ENCODE measurements at regions of chr6 and their contacts with region 1.

Region 1: GRCh38 chr6:46848684-46849360 is 55.6 kb downstream of the MEP1A start:
- DNase-seq: no peak
- H3K4me3 ChIP-seq: no peak overlapping the region
- CTCF ChIP-seq: peak; percentile 98

Region 2: GRCh38 chr6:46862381-46862780 is 13.6 kb after region 1 on chr6:
- CTCF ChIA-PET with region 1: interaction called, 13 read pairs
- POLR2A ChIA-PET with region 1: no interaction called
- DNase-seq: no peak
- H3K4me3 ChIP-seq: no peak overlapping the region
- CTCF ChIP-seq: no peak

Region 3: DNA sequence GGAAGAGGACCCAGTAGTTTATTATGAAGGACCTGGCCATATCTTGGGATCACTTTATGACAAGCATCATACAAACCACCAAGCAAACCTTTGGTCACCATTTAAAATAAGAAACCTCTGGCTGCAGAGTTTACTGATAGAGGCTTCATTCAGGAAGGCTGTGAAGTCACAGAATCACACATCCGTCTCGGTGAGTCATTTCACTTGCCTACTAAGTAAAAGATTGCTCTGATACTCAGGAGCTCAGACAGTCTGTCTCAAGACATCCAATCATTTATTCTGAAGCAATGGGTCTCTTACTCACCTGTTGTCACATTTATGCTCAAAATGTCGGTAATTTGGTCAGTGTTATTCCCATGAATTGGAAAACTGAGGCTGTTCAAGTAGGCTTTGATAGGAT is 39.2 kb after region 1 on chr6:
- CTCF ChIA-PET with region 1: no interaction called
- POLR2A ChIA-PET with region 1: no interaction called
- DNase-seq: no peak
- H3K4me3 ChIP-seq: no peak overlapping the region
- CTCF ChIP-seq: no peak

Region 4: GRCh38 chr6:46949632-46950280 is 100.9 kb after region 1 on chr6:
- CTCF ChIA-PET with region 1: no interaction called
- POLR2A ChIA-PET with region 1: no interaction called
- DNase-seq: no peak
- H3K4me3 ChIP-seq: no peak overlapping the region
- CTCF ChIP-seq: no peak

Region 5: DNA sequence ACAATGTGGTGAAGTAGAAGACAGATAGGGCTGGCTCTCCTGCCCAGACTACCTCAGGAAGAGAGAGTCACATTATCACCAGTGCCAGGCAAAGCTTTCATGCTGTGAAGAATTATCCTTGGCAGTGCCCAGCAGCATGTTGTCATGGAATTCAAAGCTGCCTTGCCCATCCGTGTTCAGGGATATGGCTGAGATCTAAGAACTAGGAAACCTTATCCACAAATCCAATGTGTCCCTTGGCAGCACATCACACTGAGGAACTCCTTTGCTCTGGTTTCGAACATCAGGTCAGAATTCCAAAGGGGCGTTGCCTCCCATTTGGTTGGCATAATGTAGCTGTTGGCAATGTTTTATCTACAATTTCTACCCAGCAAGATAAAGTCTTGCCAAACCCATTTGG is 140.6 kb after region 1 on chr6:
- CTCF ChIA-PET with region 1: interaction called, 31 read pairs
- POLR2A ChIA-PET with region 1: no interaction called
- DNase-seq: no peak
- H3K4me3 ChIP-seq: no peak overlapping the region
- CTCF ChIP-seq: no peak

Region 6: GRCh38 chr6:47042275-47042791 is 193.5 kb after region 1 on chr6 and contains the start of gene ADGRF1:
- CTCF ChIA-PET with region 1: interaction called, 56 read pairs
- POLR2A ChIA-PET with region 1: no interaction called
- DNase-seq: no peak
- H3K4me3 ChIP-seq: no peak within 1 kb of the TSS
- CTCF ChIP-seq: no peak

Region 7: DNA sequence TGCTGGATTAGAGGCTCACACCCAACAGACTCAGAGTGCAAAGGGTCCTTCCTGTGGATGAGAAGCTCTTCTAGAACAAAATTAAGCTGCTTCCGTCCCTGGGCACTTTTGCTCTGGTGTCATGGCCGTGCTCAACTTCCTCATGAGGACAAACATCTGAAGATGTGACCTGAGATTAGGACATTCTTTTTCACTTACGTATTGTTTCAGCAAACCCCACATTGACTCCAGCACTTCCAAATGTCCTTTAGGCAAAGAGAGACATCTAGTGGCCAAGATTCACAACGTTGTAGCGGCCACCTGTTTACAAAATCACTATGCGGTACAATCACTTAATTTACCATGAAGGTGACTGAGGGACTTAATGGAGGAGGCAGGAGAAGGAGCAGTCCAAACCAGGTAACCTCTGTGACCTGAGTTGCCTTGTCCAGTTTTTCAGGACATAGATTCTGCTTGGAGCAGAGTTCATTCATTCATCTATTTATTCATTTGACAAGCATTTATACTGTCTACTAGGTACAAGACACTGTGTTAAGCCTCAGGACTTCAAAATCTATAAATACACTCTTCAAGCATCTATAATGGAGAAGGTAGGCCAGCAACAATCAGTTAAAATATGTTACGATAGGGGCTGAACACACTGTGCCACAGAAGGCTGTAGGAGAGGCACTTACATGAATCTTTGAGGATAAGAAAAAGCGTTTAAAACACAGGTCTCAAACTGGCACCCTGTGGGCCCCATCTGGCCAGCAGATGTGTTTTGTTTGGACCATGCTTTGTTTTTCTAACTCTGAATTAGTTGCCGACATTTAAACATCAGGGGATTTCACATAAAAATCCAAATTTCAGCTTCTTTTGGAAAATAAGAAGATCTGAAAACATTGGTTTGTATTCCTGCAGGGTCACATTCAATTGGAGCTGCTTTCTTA is 198.9 kb after region 1 on chr6:
- CTCF ChIA-PET with region 1: interaction called, 56 read pairs
- POLR2A ChIA-PET with region 1: no interaction called
- DNase-seq: no peak
- H3K4me3 ChIP-seq: no peak overlapping the region
- CTCF ChIP-seq: peak; percentile 64

Region 8: GRCh38 chr6:48200869-48201390 is 1352.1 kb after region 1 on chr6:
- CTCF ChIA-PET with region 1: no interaction called
- POLR2A ChIA-PET with region 1: no interaction called
- DNase-seq: no peak
- H3K4me3 ChIP-seq: no peak overlapping the region
- CTCF ChIP-seq: no peak